ENCODE measurements at regions of chr1 and their contacts with region 1.

Region 1: GRCh38 chr1:84620720-84621313 is 46.6 kb upstream of the CTBS start:
- DNase-seq: peak; percentile 87
- H3K4me3 Mint-ChIP-seq: peak overlapping the region; percentile 90
- H3K27ac Mint-ChIP-seq: peak overlapping the region; percentile 85
- H3K4me1 Mint-ChIP-seq: peaks cover 19% of the 10 kb centered on the region
- H3K27me3 Mint-ChIP-seq: peaks cover 1% of the 10 kb centered on the region

Region 2: DNA sequence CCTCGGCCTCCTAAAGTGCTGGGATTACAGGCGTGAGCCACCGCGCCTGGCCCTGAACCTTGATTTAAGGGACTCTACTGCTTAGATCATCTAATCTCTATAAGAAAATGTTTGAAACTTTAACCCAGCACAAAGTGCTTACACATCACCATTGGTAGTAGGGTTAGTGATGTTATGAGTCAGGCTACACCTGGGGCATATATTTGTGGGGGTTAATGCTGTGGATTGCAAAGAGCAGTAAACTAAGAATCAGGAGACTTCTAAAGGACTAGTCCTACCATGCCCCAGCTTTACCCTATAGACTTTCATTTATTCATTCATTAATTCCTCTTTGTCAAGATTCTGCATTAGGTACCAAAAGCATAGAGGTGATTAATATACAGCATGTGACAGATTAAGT is 1502.3 kb before region 1 on chr1:
- CTCF ChIA-PET with region 1: no interaction called
- POLR2A ChIA-PET with region 1: no interaction called
- intact Hi-C with region 1: no loop called
- DNase-seq: no peak
- H3K4me3 Mint-ChIP-seq: no peak overlapping the region
- H3K27ac Mint-ChIP-seq: no peak overlapping the region
- H3K4me1 Mint-ChIP-seq: no peaks in the 10 kb centered on the region
- H3K27me3 Mint-ChIP-seq: no peaks in the 10 kb centered on the region

Region 3: DNA sequence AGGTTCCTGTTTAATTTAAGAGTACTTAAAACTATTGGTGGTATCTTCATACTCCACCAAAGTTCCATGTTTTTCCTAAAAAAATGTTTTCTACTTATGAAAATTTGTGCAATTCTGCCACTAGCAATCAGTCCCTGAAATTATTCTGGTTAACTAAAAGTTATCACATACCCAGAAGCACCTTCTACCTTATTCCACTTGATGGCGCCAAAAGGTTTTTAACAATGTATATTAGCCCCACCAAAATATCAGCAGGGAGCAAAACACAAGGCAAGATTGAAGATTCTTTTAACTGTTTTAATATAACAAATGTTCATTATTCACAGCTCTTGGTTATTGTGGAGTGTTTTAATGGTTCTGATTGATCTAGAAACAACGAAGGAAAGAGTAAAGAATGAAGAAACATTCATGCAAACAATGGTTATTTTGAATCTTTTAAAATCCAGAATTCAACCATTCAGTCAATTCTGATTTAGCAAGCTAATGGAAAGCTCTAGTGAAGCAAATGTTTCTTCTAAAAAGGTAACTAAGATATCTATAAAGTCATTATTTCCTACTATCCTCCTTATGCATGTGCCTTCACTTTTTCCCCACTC is 689.1 kb before region 1 on chr1:
- CTCF ChIA-PET with region 1: no interaction called
- POLR2A ChIA-PET with region 1: no interaction called
- intact Hi-C with region 1: loop called (anchors 10 kb)
- DNase-seq: no peak
- H3K4me3 Mint-ChIP-seq: no peak overlapping the region
- H3K27ac Mint-ChIP-seq: no peak overlapping the region
- H3K4me1 Mint-ChIP-seq: no peaks in the 10 kb centered on the region
- H3K27me3 Mint-ChIP-seq: peaks cover 6% of the 10 kb centered on the region

Region 4: GRCh38 chr1:84433258-84434080 is 187.3 kb before region 1 on chr1:
- CTCF ChIA-PET with region 1: interaction called, 13 read pairs
- POLR2A ChIA-PET with region 1: no interaction called
- intact Hi-C with region 1: no loop called
- DNase-seq: peak; percentile 63
- H3K4me3 Mint-ChIP-seq: peak overlapping the region; percentile 48
- H3K27ac Mint-ChIP-seq: peak overlapping the region; percentile 11
- H3K4me1 Mint-ChIP-seq: peaks cover 13% of the 10 kb centered on the region
- H3K27me3 Mint-ChIP-seq: no peaks in the 10 kb centered on the region

Region 5: GRCh38 chr1:84506002-84506728 is 114.7 kb before region 1 on chr1 and contains the starts of genes GNG5 and SPATA1:
- CTCF ChIA-PET with region 1: interaction called, 51 read pairs
- POLR2A ChIA-PET with region 1: interaction called, 9 read pairs
- intact Hi-C with region 1: loop called (anchors 1 kb)
- DNase-seq: peak; percentile 98
- H3K4me3 Mint-ChIP-seq: peak within 1 kb of the TSS; percentile 95
- H3K27ac Mint-ChIP-seq: peak within 1 kb of the TSS; percentile 97
- H3K4me1 Mint-ChIP-seq: peaks cover 35% of the 10 kb centered on the region
- H3K27me3 Mint-ChIP-seq: no peaks in the 10 kb centered on the region
- total RNA-seq, gene GNG5: 139 to 143 TPM
- total RNA-seq, gene SPATA1: 3.2 to 3.8 TPM

Region 6: GRCh38 chr1:84632673-84633434 is 12.0 kb after region 1 on chr1:
- CTCF ChIA-PET with region 1: interaction called, 10 read pairs
- POLR2A ChIA-PET with region 1: no interaction called
- intact Hi-C with region 1: no loop called
- DNase-seq: no peak
- H3K4me3 Mint-ChIP-seq: no peak overlapping the region
- H3K27ac Mint-ChIP-seq: no peak overlapping the region
- H3K4me1 Mint-ChIP-seq: peaks cover 7% of the 10 kb centered on the region
- H3K27me3 Mint-ChIP-seq: peaks cover 6% of the 10 kb centered on the region

Region 7: GRCh38 chr1:84936116-84936810 is 315.4 kb after region 1 on chr1:
- CTCF ChIA-PET with region 1: interaction called, 3 read pairs
- POLR2A ChIA-PET with region 1: no interaction called
- intact Hi-C with region 1: loop called (anchors 10 kb)
- DNase-seq: peak; percentile 27
- H3K4me3 Mint-ChIP-seq: no peak overlapping the region
- H3K27ac Mint-ChIP-seq: no peak overlapping the region
- H3K4me1 Mint-ChIP-seq: peaks cover 4% of the 10 kb centered on the region
- H3K27me3 Mint-ChIP-seq: no peaks in the 10 kb centered on the region